CD4-positive, alpha-beta T cell (primary cell): ENCODE measurements at regions of chr20 and their contacts with region 1.

Region 1: DNA sequence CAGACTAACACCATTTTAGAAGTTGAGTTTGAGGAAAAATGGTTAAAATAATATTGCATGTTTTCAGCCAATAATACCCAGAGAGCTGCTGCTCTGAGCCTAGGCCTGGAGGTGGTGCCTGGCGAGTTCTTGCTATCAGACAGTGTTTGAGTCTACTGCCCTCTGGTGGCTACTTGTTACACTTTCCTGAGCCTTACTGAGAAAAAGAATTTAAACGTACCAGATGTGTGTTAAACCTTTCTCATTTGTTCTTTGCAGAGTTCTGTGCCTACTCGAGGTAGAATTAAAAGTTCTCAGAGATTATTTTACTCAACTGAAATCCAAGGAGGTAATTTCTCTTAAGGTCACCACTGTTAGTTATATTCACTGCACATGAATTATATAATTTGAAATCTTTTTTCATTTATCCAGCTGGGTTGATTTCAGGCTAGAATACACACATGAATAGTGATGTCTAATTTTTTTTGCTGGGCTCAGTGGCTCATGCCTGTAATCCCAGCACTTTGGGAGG is 38.2 kb downstream of the SHLD1 start:
- DNase-seq: peak; percentile 55 to 93 (median 74)
- ATAC-seq: peak; percentile 98
- H3K4me3 ChIP-seq: no peak overlapping the region
- H3K4me3 Mint-ChIP-seq: no peak overlapping the region
- H3K27ac ChIP-seq: no peak overlapping the region
- H3K27ac Mint-ChIP-seq: peak overlapping the region; percentile 16
- H3K4me1 ChIP-seq: no peaks in the 10 kb centered on the region
- H3K4me1 Mint-ChIP-seq: peaks cover 23% of the 10 kb centered on the region
- H3K27me3 ChIP-seq: no peaks in the 10 kb centered on the region
- H3K27me3 Mint-ChIP-seq: no peaks in the 10 kb centered on the region
- CTCF ChIP-seq: peak; percentile 92

Region 2: GRCh38 chr20:5557123-5557522 is 231.3 kb before region 1 on chr20:
- CTCF ChIA-PET with region 1: interaction called, 14 read pairs
- POLR2A ChIA-PET with region 1: no interaction called
- intact Hi-C with region 1: loop called in 1 of 2 experiments (anchors 1 kb)
- DNase-seq: peak; percentile 16 to 69 (median 44)
- ATAC-seq: peak; percentile 77
- H3K4me3 ChIP-seq: no peak overlapping the region
- H3K4me3 Mint-ChIP-seq: no peak overlapping the region
- H3K27ac ChIP-seq: no peak overlapping the region
- H3K27ac Mint-ChIP-seq: peak overlapping the region; percentile 28
- H3K4me1 ChIP-seq: no peaks in the 10 kb centered on the region
- H3K4me1 Mint-ChIP-seq: peaks cover 21% of the 10 kb centered on the region
- H3K27me3 ChIP-seq: no peaks in the 10 kb centered on the region
- H3K27me3 Mint-ChIP-seq: no peaks in the 10 kb centered on the region
- CTCF ChIP-seq: peak; percentile 33

Region 3: DNA sequence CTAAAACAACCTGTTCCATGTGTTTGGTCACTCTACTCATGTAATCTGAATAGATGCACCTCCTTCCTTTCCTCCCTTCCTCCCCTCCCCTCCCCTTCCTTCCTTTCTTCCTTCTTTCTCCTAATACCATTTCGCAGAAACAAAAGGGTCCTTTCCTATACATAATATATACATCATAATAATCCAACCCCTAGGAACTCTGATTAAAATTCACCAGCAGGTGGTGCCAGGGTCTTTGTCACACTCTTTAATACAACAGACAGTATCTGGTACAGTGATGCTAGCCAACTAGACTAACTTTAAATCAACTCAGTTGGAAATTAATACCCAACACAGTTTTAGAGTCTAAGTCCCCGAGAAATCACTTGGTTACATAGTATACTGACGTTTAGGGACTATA is 219.4 kb before region 1 on chr20:
- CTCF ChIA-PET with region 1: interaction called, 30 read pairs
- POLR2A ChIA-PET with region 1: interaction called, 17 read pairs
- intact Hi-C with region 1: loop called (anchors 1 kb)
- DNase-seq: peak in 12 of 14 experiments; percentile 20 to 75 (median 40)
- ATAC-seq: peak; percentile 75
- H3K4me3 ChIP-seq: no peak overlapping the region
- H3K4me3 Mint-ChIP-seq: no peak overlapping the region
- H3K27ac ChIP-seq: no peak overlapping the region
- H3K27ac Mint-ChIP-seq: peak overlapping the region; percentile 87
- H3K4me1 ChIP-seq: peaks cover 11% of the 10 kb centered on the region
- H3K4me1 Mint-ChIP-seq: peaks cover 46% of the 10 kb centered on the region
- H3K27me3 ChIP-seq: no peaks in the 10 kb centered on the region
- H3K27me3 Mint-ChIP-seq: no peaks in the 10 kb centered on the region
- CTCF ChIP-seq: peak; percentile 68

Region 4: GRCh38 chr20:5592823-5593739 is 195.4 kb before region 1 on chr20:
- CTCF ChIA-PET with region 1: interaction called, 12 read pairs
- POLR2A ChIA-PET with region 1: no interaction called
- intact Hi-C with region 1: no loop called
- DNase-seq: peak in 2 of 14 experiments; percentile 22 to 59
- ATAC-seq: peak; percentile 66
- H3K4me3 ChIP-seq: peak overlapping the region; percentile 28
- H3K4me3 Mint-ChIP-seq: peak overlapping the region; percentile 69
- H3K27ac ChIP-seq: peak overlapping the region; percentile 52 to 62
- H3K27ac Mint-ChIP-seq: peak overlapping the region; percentile 77
- H3K4me1 ChIP-seq: peaks cover 30% of the 10 kb centered on the region
- H3K4me1 Mint-ChIP-seq: peaks cover 82% of the 10 kb centered on the region
- H3K27me3 ChIP-seq: no peaks in the 10 kb centered on the region
- H3K27me3 Mint-ChIP-seq: no peaks in the 10 kb centered on the region
- CTCF ChIP-seq: no peak

Region 5: GRCh38 chr20:5608442-5609161 is 179.8 kb before region 1 on chr20:
- CTCF ChIA-PET with region 1: interaction called, 12 read pairs
- POLR2A ChIA-PET with region 1: interaction called, 3 read pairs
- intact Hi-C with region 1: no loop called
- DNase-seq: peak in 3 of 14 experiments; percentile 39 to 47 (median 44)
- ATAC-seq: no peak
- H3K4me3 ChIP-seq: peak overlapping the region; percentile 99
- H3K4me3 Mint-ChIP-seq: peak overlapping the region; percentile 95
- H3K27ac ChIP-seq: peak overlapping the region; percentile 88 to 95
- H3K27ac Mint-ChIP-seq: peak overlapping the region; percentile 100
- H3K4me1 ChIP-seq: peaks cover 34% of the 10 kb centered on the region
- H3K4me1 Mint-ChIP-seq: peaks cover 61% of the 10 kb centered on the region
- H3K27me3 ChIP-seq: no peaks in the 10 kb centered on the region
- H3K27me3 Mint-ChIP-seq: no peaks in the 10 kb centered on the region
- CTCF ChIP-seq: no peak

Region 6: GRCh38 chr20:5766085-5766764 is 22.2 kb before region 1 on chr20:
- CTCF ChIA-PET with region 1: no interaction called
- POLR2A ChIA-PET with region 1: no interaction called
- intact Hi-C with region 1: no loop called
- DNase-seq: no peak
- ATAC-seq: no peak
- H3K4me3 ChIP-seq: no peak overlapping the region
- H3K4me3 Mint-ChIP-seq: no peak overlapping the region
- H3K27ac ChIP-seq: no peak overlapping the region
- H3K27ac Mint-ChIP-seq: no peak overlapping the region
- H3K4me1 ChIP-seq: peaks cover 7% of the 10 kb centered on the region
- H3K4me1 Mint-ChIP-seq: peaks cover 21% of the 10 kb centered on the region
- H3K27me3 ChIP-seq: no peaks in the 10 kb centered on the region
- H3K27me3 Mint-ChIP-seq: no peaks in the 10 kb centered on the region
- CTCF ChIP-seq: no peak

Region 7: GRCh38 chr20:5822569-5822968 is 34.1 kb after region 1 on chr20:
- CTCF ChIA-PET with region 1: no interaction called
- POLR2A ChIA-PET with region 1: no interaction called
- intact Hi-C with region 1: no loop called
- DNase-seq: no peak
- ATAC-seq: no peak
- H3K4me3 ChIP-seq: no peak overlapping the region
- H3K4me3 Mint-ChIP-seq: no peak overlapping the region
- H3K27ac ChIP-seq: no peak overlapping the region
- H3K27ac Mint-ChIP-seq: no peak overlapping the region
- H3K4me1 ChIP-seq: no peaks in the 10 kb centered on the region
- H3K4me1 Mint-ChIP-seq: peaks cover 19% of the 10 kb centered on the region
- H3K27me3 ChIP-seq: no peaks in the 10 kb centered on the region
- H3K27me3 Mint-ChIP-seq: no peaks in the 10 kb centered on the region
- CTCF ChIP-seq: no peak

Region 8: GRCh38 chr20:6008254-6008653 is 219.8 kb after region 1 on chr20:
- CTCF ChIA-PET with region 1: interaction called, 3 read pairs
- POLR2A ChIA-PET with region 1: no interaction called
- intact Hi-C with region 1: loop called in 1 of 2 experiments (anchors 1 kb)
- DNase-seq: peak in 3 of 14 experiments; percentile 7 to 60 (median 51)
- ATAC-seq: no peak
- H3K4me3 ChIP-seq: no peak overlapping the region
- H3K4me3 Mint-ChIP-seq: peak overlapping the region; percentile 99
- H3K27ac ChIP-seq: no peak overlapping the region
- H3K27ac Mint-ChIP-seq: peak overlapping the region; percentile 90
- H3K4me1 ChIP-seq: peaks cover 7% of the 10 kb centered on the region
- H3K4me1 Mint-ChIP-seq: peaks cover 52% of the 10 kb centered on the region
- H3K27me3 ChIP-seq: no peaks in the 10 kb centered on the region
- H3K27me3 Mint-ChIP-seq: no peaks in the 10 kb centered on the region
- CTCF ChIP-seq: no peak

Region 9: GRCh38 chr20:6074145-6074561 is 285.7 kb after region 1 on chr20:
- CTCF ChIA-PET with region 1: interaction called, 3 read pairs
- POLR2A ChIA-PET with region 1: no interaction called
- intact Hi-C with region 1: loop called (anchors 2 to 5 kb)
- DNase-seq: peak in 2 of 14 experiments; percentile 19 to 33
- ATAC-seq: peak; percentile 39
- H3K4me3 ChIP-seq: no peak overlapping the region
- H3K4me3 Mint-ChIP-seq: no peak overlapping the region
- H3K27ac ChIP-seq: no peak overlapping the region
- H3K27ac Mint-ChIP-seq: no peak overlapping the region
- H3K4me1 ChIP-seq: no peaks in the 10 kb centered on the region
- H3K4me1 Mint-ChIP-seq: no peaks in the 10 kb centered on the region
- H3K27me3 ChIP-seq: no peaks in the 10 kb centered on the region
- H3K27me3 Mint-ChIP-seq: no peaks in the 10 kb centered on the region
- CTCF ChIP-seq: no peak